Transverse colon (tissue), 4 donors: ENCODE measurements at regions of chr13 and their contacts with region 1.

Region 1: GRCh38 chr13:45464687-45465453 is at the start of gene COG3:
- DNase-seq: peak; percentile 97
- H3K4me3 ChIP-seq: peak within 1 kb of the TSS; percentile 89 to 97 (median 92)
- H3K27ac ChIP-seq: peak within 1 kb of the TSS; percentile 96 to 98 (median 97)
- H3K4me1 ChIP-seq: peaks cover 21 to 47% (median 40%) of the 10 kb centered on the region in 4 donors
- H3K27me3 ChIP-seq: no peaks in the 10 kb centered on the region
- CTCF ChIP-seq: peak in 3 of 5 experiments; percentile 41 to 90 (median 84)
- EP300 ChIP-seq: no peak
- POLR2A ChIP-seq: peak; percentile 93
- total RNA-seq, gene COG3: 38.2 to 103 (median 58.5) TPM

Region 2: GRCh38 chr13:45417790-45418534 is 46.9 kb before region 1 on chr13 and contains the start of gene SLC25A30:
- in situ Hi-C with region 1: no loop called
- intact Hi-C with region 1: loop called (anchors 5 kb)
- DNase-seq: peak; percentile 97
- H3K4me3 ChIP-seq: peak within 1 kb of the TSS; percentile 31 to 81 (median 66)
- H3K27ac ChIP-seq: peak within 1 kb of the TSS; percentile 93 to 97 (median 95)
- H3K4me1 ChIP-seq: peaks cover 7 to 46% (median 27%) of the 10 kb centered on the region in 4 donors
- H3K27me3 ChIP-seq: no peaks in the 10 kb centered on the region
- CTCF ChIP-seq: no peak
- EP300 ChIP-seq: no peak
- POLR2A ChIP-seq: peak; percentile 76
- total RNA-seq, gene SLC25A30: 2.4 to 15.6 (median 6.5) TPM

Region 3: DNA sequence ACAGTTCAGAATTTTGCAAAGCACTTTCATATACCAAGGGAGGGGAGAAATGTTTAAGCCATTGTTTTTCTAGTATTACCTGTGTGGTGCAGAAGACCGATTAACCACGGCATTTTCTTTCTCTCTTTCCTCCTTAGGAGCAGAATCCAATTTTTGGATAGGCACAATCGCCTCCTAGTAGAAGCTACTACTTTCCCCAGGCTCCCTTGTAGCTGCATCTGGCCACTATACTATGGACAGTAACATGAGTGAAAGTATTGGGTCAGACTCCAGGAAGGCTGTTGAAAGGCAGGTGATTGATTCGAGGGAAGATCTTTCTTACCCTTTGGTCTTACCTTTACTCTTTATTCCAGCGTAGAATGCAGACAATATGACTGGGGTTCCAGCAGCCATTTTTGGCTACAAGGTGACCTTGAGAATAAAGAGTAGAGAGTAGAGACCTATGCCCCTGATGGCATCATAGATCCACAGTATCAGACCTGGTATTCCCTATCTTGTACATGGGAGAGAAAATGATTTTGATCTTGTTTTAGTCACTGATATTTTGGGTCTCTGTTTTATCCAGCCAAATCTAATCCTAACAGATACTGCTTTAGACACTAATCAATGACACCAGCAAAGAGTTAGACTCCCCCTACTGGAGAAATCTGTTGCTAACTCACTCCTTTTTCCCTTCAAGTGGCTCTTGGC is 823.8 kb after region 1 on chr13:
- in situ Hi-C with region 1: no loop called
- intact Hi-C with region 1: no loop called
- DNase-seq: no peak
- H3K4me3 ChIP-seq: no peak overlapping the region
- H3K27ac ChIP-seq: no peak overlapping the region
- H3K4me1 ChIP-seq: no peaks in the 10 kb centered on the region
- H3K27me3 ChIP-seq: no peaks in the 10 kb centered on the region
- CTCF ChIP-seq: peak; percentile 32 to 55 (median 40)
- EP300 ChIP-seq: no peak
- POLR2A ChIP-seq: no peak